ENCODE measurements at regions of chr15 and their contacts with region 1.

Region 1: DNA sequence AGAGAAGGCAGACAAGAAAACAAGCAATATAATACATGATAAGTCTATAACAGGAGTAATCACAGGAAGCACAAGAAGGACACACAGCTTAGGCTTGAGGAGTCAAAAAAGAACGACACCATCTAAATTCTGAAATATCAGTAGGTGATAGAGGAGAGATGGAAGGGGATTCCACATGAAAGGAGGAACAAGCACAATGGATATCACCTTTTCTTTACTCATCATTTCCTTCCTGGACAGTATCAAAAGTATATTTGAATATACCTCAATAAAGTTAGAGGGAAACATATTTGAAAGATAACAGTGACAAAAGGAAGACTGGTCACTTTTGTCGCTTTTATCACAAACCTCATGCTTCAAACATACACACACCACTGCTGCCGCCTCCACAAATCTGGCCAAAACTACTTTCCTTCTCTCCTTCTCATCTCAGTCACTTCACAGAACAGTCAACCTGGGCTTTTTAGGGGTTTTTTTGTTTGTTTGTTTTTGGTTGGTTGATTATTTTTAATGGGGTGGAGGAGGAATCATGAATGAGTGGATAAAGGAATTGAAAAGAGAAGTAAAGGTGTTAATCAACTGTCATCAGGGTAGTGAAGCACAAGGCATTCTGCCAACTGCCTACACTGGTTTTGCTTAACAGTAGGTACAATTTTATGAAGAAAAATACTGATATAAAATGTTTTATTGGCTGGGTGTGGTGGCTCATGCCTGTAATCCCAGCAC is 18.5 kb downstream of the DENND4A start:
- DNase-seq: peak; percentile 35
- H3K4me3 Mint-ChIP-seq: no peak overlapping the region
- H3K27ac Mint-ChIP-seq: peak overlapping the region; percentile 42
- H3K4me1 Mint-ChIP-seq: peaks cover 40% of the 10 kb centered on the region
- H3K27me3 Mint-ChIP-seq: no peaks in the 10 kb centered on the region

Region 2: GRCh38 chr15:65133548-65134200 is 639.9 kb before region 1 on chr15 and contains the start of gene PDCD7:
- CTCF ChIA-PET with region 1: no interaction called
- intact Hi-C with region 1: loop called (anchors 5 kb)
- DNase-seq: peak; percentile 90
- H3K4me3 Mint-ChIP-seq: peak within 1 kb of the TSS; percentile 85
- H3K27ac Mint-ChIP-seq: peak within 1 kb of the TSS; percentile 82
- H3K4me1 Mint-ChIP-seq: peaks cover 23% of the 10 kb centered on the region
- H3K27me3 Mint-ChIP-seq: no peaks in the 10 kb centered on the region
- total RNA-seq, gene PDCD7: 28.6 to 31.5 TPM

Region 3: GRCh38 chr15:65264863-65265430 is 508.6 kb before region 1 on chr15:
- CTCF ChIA-PET with region 1: no interaction called
- intact Hi-C with region 1: no loop called
- DNase-seq: no peak
- H3K4me3 Mint-ChIP-seq: no peak overlapping the region
- H3K27ac Mint-ChIP-seq: no peak overlapping the region
- H3K4me1 Mint-ChIP-seq: no peaks in the 10 kb centered on the region
- H3K27me3 Mint-ChIP-seq: no peaks in the 10 kb centered on the region

Region 4: GRCh38 chr15:65804252-65804931 is 30.8 kb after region 1 on chr15:
- CTCF ChIA-PET with region 1: interaction called, 7 read pairs
- intact Hi-C with region 1: loop called (anchors 1 kb)
- DNase-seq: no peak
- H3K4me3 Mint-ChIP-seq: no peak overlapping the region
- H3K27ac Mint-ChIP-seq: peak overlapping the region; percentile 36
- H3K4me1 Mint-ChIP-seq: peaks cover 36% of the 10 kb centered on the region
- H3K27me3 Mint-ChIP-seq: no peaks in the 10 kb centered on the region

Region 5: DNA sequence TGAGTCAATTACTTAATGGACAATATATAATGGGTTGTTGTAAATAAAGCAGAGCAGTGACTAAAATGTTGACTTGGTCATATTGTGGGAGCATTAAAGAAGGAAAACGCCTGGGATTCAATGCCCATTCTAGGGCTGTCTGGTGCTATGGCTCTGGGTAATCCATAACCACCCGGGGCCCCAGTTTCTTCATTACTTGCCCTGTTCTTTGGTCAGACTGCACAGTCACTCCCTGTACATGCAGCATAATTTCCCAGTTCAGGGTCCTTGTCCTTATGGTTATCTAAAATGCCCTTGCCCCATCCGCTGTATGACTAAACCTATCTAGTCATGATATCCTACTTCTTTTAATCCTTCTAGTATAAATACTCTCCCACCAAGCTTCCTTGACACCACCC is 46.0 kb after region 1 on chr15:
- CTCF ChIA-PET with region 1: no interaction called
- intact Hi-C with region 1: no loop called
- DNase-seq: no peak
- H3K4me3 Mint-ChIP-seq: no peak overlapping the region
- H3K27ac Mint-ChIP-seq: peak overlapping the region; percentile 48
- H3K4me1 Mint-ChIP-seq: peaks cover 50% of the 10 kb centered on the region
- H3K27me3 Mint-ChIP-seq: no peaks in the 10 kb centered on the region